ENCODE measurements at regions of chr1 and their contacts with region 1.

Region 1: DNA sequence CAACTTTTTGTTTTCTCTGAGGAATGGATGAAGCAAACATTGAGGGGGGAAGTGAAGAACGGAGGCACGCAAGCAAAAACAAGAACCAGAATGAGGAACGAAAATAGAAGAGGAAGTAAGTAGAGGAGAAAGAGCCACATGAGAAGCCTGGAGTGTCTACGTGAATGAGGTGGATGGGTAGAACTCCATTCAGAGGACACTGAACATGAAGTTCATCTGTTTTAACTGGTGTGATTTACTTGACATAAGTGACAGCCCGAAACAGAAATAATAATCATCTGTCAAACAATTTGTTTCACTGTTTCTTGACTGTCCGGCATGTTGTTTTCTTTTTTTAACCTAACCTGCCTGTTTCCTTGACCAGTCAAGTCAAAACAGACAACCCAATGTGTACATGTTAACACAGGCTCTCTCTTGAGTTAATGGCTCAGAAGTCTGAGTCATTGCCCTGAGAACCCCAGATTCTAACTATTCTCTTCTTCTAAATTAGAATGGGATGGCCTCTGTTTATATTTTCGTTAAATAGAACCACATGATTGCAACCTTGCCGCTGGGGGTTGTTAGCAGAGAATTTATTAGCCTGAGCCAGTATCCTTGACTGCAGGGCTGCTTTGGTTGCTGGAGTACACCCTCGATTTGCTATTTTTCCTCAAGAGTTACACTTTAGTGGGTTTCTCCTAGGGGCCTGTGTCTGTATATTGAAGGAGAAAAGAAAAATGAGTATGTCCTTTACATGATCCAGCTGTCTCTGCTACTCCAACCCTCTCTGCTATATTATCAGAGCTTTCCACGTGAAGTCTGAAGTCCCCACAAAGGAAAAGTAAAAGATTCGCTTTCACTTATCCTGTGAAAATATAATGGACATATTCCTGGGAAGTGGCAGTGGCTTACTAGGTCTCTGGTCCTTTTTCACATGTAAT is 151.7 kb downstream of the ZC3H11B start:
- DNase-seq: no peak
- H3K4me3 Mint-ChIP-seq: no peak overlapping the region
- H3K27ac Mint-ChIP-seq: peak overlapping the region; percentile 54
- H3K4me1 Mint-ChIP-seq: peaks cover 51% of the 10 kb centered on the region
- H3K27me3 Mint-ChIP-seq: no peaks in the 10 kb centered on the region

Region 2: DNA sequence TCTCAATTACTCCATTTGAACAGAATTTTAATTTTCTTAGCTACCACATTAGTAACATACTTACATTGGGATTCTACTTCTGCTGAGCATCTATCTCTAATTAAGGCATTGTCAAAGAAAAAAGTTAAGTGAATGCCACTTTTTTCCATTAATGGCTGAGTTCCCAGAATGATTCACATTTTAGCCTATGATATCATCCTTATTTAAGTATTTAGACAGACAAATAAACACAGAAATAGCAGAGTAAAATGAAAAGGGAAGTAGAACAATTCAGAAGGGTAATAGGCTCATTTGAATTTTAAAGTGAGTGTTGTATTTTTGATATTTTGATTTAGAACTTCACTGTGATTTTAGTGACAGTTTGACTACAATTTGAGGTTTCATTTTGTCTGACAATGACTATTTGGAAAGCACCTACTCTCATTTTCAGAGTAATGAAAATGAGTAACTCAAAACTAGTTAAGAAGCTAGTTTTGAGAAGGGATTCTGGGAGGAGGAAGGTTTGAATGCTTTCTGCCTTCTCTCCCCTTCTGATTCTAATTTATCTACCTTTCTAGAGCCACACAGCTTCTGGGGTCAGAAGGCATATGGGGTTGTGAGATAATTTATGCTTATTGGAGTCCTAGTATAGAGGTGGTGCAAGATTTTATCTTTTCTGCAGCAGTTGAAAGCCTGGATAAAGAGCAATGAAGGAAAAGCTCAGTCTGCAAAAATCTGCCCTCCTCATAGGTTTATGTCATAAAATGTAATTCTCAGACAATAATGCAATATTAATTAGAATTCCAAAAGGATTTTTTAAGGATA is 271.9 kb before region 1 on chr1:
- intact Hi-C with region 1: loop called (anchors 2 kb)
- DNase-seq: no peak
- H3K4me3 Mint-ChIP-seq: no peak overlapping the region
- H3K27ac Mint-ChIP-seq: no peak overlapping the region
- H3K4me1 Mint-ChIP-seq: peaks cover 21% of the 10 kb centered on the region
- H3K27me3 Mint-ChIP-seq: no peaks in the 10 kb centered on the region

Region 3: DNA sequence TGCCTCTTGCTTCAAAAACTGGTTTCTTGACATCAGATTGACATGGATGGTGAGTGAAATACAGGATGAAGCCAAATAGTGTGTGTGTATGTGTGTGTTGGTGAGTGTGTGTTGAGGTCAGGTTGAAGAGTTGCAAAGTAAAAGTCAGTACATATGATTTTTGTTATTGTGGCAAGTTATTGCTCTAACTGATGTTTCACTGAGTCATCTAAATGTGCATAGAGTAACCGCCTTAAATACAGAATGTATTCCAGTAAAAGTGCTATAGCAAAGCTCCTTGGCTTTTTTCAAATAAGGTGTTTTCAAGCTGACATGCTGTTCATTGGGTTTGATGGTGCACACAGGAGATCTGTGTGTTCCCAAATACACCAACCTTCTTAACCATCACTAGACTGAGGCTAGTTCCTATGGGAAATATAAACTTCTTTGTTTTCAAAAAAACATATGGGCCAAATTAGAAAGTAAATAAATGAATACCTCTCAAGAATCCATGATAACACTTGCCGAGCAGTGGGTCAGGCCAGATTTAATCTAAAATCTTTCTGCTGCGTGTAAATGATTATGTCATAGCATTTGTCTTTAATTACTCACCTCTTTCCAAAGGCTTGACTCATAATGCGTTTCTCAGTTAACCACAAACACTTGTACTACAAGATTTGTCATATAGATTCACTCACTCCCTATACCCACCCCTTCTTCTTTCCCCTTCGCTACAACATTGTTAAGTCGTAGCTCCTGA is 136.4 kb before region 1 on chr1:
- intact Hi-C with region 1: loop called (anchors 10 kb)
- DNase-seq: no peak
- H3K4me3 Mint-ChIP-seq: no peak overlapping the region
- H3K27ac Mint-ChIP-seq: no peak overlapping the region
- H3K4me1 Mint-ChIP-seq: peaks cover 10% of the 10 kb centered on the region
- H3K27me3 Mint-ChIP-seq: peaks cover 38% of the 10 kb centered on the region

Region 4: GRCh38 chr1:219391297-219391696 is 69.9 kb before region 1 on chr1:
- intact Hi-C with region 1: loop called (anchors 2 kb)
- DNase-seq: no peak
- H3K4me3 Mint-ChIP-seq: no peak overlapping the region
- H3K27ac Mint-ChIP-seq: no peak overlapping the region
- H3K4me1 Mint-ChIP-seq: peaks cover 9% of the 10 kb centered on the region
- H3K27me3 Mint-ChIP-seq: peaks cover 34% of the 10 kb centered on the region

Region 5: DNA sequence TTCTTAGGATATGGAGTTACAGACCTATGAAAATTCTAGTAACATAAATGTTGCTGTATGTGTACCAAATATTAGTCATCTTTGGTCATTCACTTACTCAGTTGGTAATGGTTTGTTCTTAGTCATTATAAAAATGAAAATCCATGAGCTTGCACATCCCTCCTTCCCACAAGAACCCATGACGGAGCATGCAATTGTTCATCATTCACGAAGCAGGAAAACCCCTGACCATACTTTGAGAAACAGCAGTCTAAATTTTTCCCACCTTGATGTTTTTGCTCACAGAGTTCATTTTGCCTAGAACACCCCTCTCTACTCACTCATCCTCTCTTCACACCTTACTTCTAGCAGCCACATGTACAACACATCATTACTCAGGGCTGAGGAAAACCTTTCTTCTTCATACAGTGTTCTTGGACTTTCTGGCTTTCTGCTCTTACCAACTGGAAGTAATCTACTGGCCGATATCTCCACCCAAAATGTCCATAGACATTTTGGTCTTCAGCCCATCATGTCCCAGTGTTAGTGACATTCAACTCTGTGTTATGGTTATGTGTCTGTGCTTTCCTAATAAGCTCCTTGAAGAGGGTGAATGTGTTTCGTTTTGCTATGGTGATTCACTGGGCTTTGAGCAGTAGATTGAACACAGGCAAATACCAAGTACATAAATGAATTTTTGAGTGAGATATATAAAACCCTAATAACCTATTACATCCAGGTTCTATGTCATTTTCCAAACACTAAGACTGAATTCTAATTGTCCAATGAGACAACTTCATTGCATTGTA is 38.2 kb before region 1 on chr1:
- intact Hi-C with region 1: loop called (anchors 1 kb)
- DNase-seq: no peak
- H3K4me3 Mint-ChIP-seq: no peak overlapping the region
- H3K27ac Mint-ChIP-seq: peak overlapping the region; percentile 77
- H3K4me1 Mint-ChIP-seq: peaks cover 18% of the 10 kb centered on the region
- H3K27me3 Mint-ChIP-seq: no peaks in the 10 kb centered on the region

Region 6: DNA sequence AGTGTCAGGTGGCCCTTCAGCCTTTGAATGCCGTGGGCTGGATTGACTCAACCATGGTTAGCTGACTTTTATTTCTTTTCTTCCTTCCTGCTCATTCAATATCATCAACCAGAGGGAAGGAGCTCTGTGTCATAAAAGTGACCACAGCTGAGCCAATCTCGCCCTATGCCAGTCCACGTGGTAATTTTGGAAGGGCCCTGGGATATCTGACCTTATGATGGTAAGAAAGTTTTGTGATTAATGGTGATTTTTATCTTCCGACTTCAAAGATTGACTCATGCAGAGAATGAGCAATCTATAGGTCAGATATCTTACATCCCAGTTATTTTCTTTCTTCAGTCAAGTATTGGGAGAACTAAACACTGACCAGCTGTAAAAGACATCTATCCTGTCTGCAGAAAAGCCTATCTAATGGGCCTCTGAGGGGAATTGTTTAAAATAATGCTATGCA is 18.5 kb before region 1 on chr1:
- intact Hi-C with region 1: loop called (anchors 2 kb)
- DNase-seq: no peak
- H3K4me3 Mint-ChIP-seq: no peak overlapping the region
- H3K27ac Mint-ChIP-seq: no peak overlapping the region
- H3K4me1 Mint-ChIP-seq: peaks cover 14% of the 10 kb centered on the region
- H3K27me3 Mint-ChIP-seq: no peaks in the 10 kb centered on the region

Region 7: DNA sequence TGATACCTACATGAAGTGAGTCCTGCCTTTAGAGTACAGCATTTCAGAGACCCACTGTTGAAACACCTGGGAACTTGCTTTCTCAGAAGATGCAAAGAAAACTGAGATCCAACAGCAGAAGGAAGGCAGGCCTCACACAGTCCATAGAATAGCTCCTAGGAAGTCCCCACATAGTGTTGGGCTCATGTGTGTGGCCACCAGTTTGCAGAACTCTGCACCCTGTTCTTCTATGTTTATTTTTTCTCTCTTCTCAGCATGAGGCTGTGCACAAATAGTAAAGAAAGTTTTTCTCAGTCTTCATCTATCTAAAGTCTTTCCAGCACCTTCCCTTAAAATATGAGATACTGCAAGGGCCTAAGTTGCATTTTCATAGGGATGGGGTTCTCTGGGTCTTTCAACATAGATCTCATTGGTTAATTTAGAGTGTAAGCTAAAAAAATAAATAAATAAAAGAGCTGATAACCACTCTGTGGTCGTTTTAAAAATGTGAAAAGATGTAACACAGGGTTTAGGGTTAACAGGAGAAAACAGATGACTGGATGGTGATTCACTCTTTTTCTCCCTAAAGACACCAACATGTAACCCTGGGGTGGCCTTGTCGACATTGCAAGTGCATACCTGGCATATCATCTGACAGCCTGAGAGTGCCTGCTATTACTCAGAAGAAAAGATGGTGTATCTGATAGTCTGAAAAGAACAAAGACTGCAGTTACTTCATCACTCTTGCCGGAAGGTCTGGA is 57.2 kb after region 1 on chr1:
- intact Hi-C with region 1: loop called (anchors 1 kb)
- DNase-seq: peak; percentile 9
- H3K4me3 Mint-ChIP-seq: no peak overlapping the region
- H3K27ac Mint-ChIP-seq: no peak overlapping the region
- H3K4me1 Mint-ChIP-seq: peaks cover 9% of the 10 kb centered on the region
- H3K27me3 Mint-ChIP-seq: no peaks in the 10 kb centered on the region